H1 (cell line): ENCODE measurements at regions of chr17 and their contacts with region 1.

Region 1: DNA sequence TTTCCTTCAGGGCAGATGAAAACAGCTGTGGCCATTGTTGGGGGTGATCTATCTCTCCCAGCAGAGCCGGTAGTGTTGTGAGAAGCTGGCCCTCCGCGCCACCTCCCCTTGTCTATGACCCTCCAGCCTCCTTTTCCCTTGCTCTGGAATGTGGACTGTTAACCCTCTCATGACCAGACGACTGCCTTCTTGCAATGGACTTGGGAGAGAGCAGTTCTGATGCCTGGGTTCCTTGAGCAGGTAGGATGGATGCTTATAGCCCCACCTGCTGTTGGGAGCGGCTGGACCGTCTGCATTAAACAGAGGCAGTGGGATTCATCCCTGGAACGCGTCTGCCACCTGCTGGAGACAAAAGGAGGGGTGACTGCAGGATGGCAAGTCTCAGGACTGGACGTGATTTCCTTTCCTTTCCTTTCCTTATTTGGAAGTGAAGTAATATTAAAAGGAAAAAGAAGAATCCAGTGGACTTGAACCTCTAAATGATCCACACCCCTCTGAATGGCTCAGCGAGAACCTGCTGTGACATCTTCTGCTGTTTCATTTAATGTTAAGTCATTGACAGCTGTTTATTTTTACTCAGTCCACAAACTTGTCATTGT is 1.8 kb upstream of the SOST start:
- DNase-seq: peak; percentile 95 to 98
- H3K4me3 ChIP-seq: no peak overlapping the region
- H3K27ac ChIP-seq: no peak overlapping the region
- H3K4me1 ChIP-seq: peaks cover 4 to 21% (median 8%) of the 10 kb centered on the region in 4 experiments; a peak in 6 of 7 replicates
- H3K27me3 ChIP-seq: peaks cover 0 to 17% (median 10%) of the 10 kb centered on the region in 4 experiments; a peak in 5 of 7 replicates
- CTCF ChIP-seq: peak; percentile 100
- EP300 ChIP-seq: no peak
- POLR2A ChIP-seq: no peak
- RAD21 ChIP-seq: peak; percentile 100

Region 2: DNA sequence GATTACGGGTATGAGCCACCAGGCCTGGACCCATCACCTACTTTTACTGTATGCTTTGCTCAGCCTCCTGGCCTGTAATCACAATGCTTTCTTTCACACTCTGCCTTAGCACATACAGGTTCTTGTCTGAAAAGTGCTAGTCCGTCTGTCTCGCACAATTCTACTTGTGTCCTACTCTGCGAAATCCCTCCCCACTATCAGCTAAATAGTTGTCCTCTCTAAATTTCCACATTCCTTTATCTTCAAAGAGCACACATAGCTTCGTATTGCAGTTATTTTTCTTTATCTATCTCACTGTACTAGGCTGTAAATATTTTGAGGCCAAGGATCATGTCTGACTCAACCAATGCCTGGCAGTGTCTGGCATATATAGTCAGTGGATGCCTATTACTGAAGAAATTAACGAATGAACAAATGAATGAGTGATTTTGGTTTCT is 175.7 kb before region 1 on chr17:
- CTCF ChIA-PET with region 1: interaction called, 220 read pairs
- POLR2A ChIA-PET with region 1: interaction called, 5 read pairs
- DNase-seq: no peak
- H3K4me3 ChIP-seq: no peak overlapping the region
- H3K27ac ChIP-seq: no peak overlapping the region
- H3K4me1 ChIP-seq: no peaks in the 10 kb centered on the region
- H3K27me3 ChIP-seq: no peaks in the 10 kb centered on the region
- CTCF ChIP-seq: no peak
- EP300 ChIP-seq: no peak
- POLR2A ChIP-seq: no peak
- RAD21 ChIP-seq: no peak

Region 3: DNA sequence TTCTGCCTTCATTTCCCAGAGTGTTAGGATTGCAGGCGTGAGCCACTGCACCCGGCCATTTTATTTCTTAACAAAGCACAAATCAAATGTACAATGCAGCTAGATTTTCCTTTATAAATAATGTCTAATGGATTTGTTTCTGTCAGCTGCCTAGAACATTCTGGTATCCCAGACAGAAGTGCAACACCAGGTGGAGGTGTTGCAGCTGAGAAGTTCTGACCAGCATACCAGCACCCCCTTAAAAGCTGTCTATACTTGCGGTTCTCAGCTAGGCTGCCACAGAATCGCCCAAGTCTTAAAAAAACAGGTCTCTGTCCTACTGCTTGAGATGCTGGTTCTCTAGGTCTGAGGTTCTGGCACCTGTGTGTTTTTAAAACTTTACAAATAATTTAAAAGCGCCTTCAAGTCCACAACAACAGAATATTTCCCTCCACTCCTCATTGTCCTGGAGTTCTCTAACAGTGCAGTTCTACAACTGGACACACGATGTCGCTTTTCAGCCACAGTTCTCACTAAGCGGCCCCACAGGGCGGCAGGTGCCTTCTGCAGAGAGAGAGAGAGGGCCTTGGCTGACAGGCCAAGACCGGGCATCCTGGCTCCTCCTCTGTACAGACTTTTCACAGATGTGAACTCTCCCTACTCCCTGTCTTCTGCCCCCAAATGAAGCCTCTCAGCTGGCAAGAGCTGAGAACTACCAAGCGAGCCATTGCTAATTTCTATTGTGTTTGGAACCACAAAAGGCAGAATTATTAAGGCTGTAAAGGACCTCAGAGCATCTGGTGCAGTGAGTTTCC is 66.1 kb before region 1 on chr17:
- CTCF ChIA-PET with region 1: interaction called, 969 read pairs
- POLR2A ChIA-PET with region 1: interaction called, 11 read pairs
- DNase-seq: peak in 1 of 2 experiments; percentile 85
- H3K4me3 ChIP-seq: no peak overlapping the region; a peak in 1 of 8 replicates
- H3K27ac ChIP-seq: no peak overlapping the region
- H3K4me1 ChIP-seq: peaks cover 0 to 6% (median 4%) of the 10 kb centered on the region in 4 experiments; a peak in 3 of 7 replicates
- H3K27me3 ChIP-seq: no peaks in the 10 kb centered on the region
- CTCF ChIP-seq: peak; percentile 65 to 98 (median 83)
- EP300 ChIP-seq: no peak
- POLR2A ChIP-seq: no peak
- RAD21 ChIP-seq: peak; percentile 95 to 98

Region 4: GRCh38 chr17:43713494-43714162 is 46.7 kb before region 1 on chr17:
- CTCF ChIA-PET with region 1: interaction called, 969 read pairs
- POLR2A ChIA-PET with region 1: interaction called, 4 read pairs
- DNase-seq: peak in 1 of 2 experiments; percentile 70
- H3K4me3 ChIP-seq: peak overlapping the region; percentile 47 to 72 (median 51); a peak in 7 of 8 replicates
- H3K27ac ChIP-seq: no peak overlapping the region
- H3K4me1 ChIP-seq: peaks cover 0 to 2% (median 0%) of the 10 kb centered on the region in 4 experiments; a peak in 2 of 7 replicates
- H3K27me3 ChIP-seq: peaks cover 10 to 28% (median 24%) of the 10 kb centered on the region in 4 experiments
- CTCF ChIP-seq: no peak
- EP300 ChIP-seq: no peak
- POLR2A ChIP-seq: no peak
- RAD21 ChIP-seq: no peak

Region 5: DNA sequence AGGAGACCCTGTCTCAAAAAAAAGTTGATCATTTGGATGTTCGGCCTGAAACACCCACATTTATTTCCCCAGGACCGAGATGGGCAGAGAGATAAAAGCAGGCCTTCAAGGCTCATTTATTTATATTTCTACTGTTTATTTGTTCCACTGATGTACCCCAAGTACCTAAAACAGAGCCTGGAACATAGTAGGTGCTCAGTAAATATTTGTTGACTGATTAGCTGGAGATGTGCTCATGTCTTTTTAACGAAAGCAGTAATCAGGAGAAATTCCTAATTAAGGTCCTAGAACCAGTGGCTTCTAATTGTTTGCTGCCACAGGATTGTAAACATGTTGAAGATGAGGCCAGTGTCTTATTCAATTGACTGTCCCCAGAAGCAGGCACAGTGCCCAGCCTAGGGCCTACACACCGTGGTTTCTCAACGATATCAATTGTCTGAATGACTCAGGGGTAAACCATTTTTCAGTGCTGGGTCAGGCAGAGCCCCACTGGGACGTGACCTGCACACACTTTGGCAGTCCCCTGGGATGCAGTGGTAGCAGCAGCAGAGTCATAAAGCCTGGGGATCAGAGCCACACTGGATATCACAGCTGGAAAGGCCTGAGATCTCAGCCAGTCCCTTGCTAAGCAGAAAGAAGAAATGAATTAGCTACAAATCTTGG is 36.5 kb before region 1 on chr17:
- CTCF ChIA-PET with region 1: interaction called, 32 read pairs
- POLR2A ChIA-PET with region 1: interaction called, 7 read pairs
- DNase-seq: no peak
- H3K4me3 ChIP-seq: no peak overlapping the region
- H3K27ac ChIP-seq: no peak overlapping the region
- H3K4me1 ChIP-seq: peaks cover 0 to 3% (median 1%) of the 10 kb centered on the region in 4 experiments; a peak in 3 of 7 replicates
- H3K27me3 ChIP-seq: no peaks in the 10 kb centered on the region; a peak in 1 of 7 replicates
- CTCF ChIP-seq: no peak
- EP300 ChIP-seq: no peak
- POLR2A ChIP-seq: no peak
- RAD21 ChIP-seq: no peak

Region 6: GRCh38 chr17:43740541-43740940 is 19.8 kb before region 1 on chr17:
- CTCF ChIA-PET with region 1: interaction called, 90 read pairs
- POLR2A ChIA-PET with region 1: interaction called, 6 read pairs
- DNase-seq: no peak
- H3K4me3 ChIP-seq: no peak overlapping the region
- H3K27ac ChIP-seq: no peak overlapping the region
- H3K4me1 ChIP-seq: peaks cover 3 to 17% (median 6%) of the 10 kb centered on the region in 4 experiments
- H3K27me3 ChIP-seq: no peaks in the 10 kb centered on the region
- CTCF ChIP-seq: no peak
- EP300 ChIP-seq: no peak
- POLR2A ChIP-seq: no peak
- RAD21 ChIP-seq: no peak

Region 7: DNA sequence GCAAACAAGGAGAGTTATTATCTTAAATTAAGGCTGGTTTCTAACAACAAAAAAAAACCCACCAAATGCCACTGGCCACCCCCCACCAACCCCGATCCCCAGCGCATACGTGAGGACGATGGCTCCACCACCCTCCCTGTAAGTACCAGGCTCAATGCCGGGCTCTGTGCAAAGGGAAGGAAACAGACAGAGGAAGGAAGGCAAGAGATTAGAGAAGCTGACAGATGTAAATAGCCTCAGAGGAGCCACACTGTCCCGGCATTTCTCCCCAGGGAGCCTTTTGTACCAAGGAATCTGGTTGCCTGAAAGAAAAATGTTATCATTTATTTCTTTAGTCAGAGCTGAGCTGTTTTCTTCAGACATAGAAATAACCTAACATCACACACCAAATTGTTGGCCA is 14.8 kb before region 1 on chr17:
- CTCF ChIA-PET with region 1: interaction called, 90 read pairs
- POLR2A ChIA-PET with region 1: interaction called, 6 read pairs
- DNase-seq: no peak
- H3K4me3 ChIP-seq: no peak overlapping the region
- H3K27ac ChIP-seq: no peak overlapping the region
- H3K4me1 ChIP-seq: peaks cover 5 to 16% (median 8%) of the 10 kb centered on the region in 4 experiments; a peak in 6 of 7 replicates
- H3K27me3 ChIP-seq: no peaks in the 10 kb centered on the region
- CTCF ChIP-seq: no peak
- EP300 ChIP-seq: no peak
- POLR2A ChIP-seq: no peak
- RAD21 ChIP-seq: no peak

Region 8: DNA sequence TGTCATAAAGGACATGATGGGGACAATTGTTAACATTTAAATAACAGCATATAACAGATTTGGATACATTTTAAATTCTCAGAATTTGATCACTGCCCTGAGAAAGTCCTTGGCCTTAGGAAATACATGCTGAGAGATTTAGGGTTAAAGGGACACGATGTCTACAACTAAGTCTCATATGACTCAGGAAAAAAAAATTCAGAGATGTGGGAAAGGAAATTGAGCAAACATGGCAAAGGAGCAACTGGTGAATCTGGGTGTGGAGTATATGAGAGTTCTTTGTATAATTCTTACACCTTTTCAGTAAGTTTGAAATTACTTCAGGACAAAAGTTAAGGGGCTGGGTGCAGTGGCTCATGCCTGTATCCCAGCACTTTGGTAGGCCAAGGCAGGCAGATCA is 54.4 kb after region 1 on chr17:
- CTCF ChIA-PET with region 1: no interaction called
- POLR2A ChIA-PET with region 1: no interaction called
- DNase-seq: no peak
- H3K4me3 ChIP-seq: no peak overlapping the region
- H3K27ac ChIP-seq: no peak overlapping the region
- H3K4me1 ChIP-seq: peaks cover 0 to 4% (median 1%) of the 10 kb centered on the region in 4 experiments; a peak in 1 of 7 replicates
- H3K27me3 ChIP-seq: no peaks in the 10 kb centered on the region
- CTCF ChIP-seq: no peak
- EP300 ChIP-seq: no peak
- POLR2A ChIP-seq: no peak
- RAD21 ChIP-seq: no peak